Common myeloid progenitor, CD34-positive (primary cell): ENCODE measurements at regions of chr13 and their contacts with region 1.

Region 1: DNA sequence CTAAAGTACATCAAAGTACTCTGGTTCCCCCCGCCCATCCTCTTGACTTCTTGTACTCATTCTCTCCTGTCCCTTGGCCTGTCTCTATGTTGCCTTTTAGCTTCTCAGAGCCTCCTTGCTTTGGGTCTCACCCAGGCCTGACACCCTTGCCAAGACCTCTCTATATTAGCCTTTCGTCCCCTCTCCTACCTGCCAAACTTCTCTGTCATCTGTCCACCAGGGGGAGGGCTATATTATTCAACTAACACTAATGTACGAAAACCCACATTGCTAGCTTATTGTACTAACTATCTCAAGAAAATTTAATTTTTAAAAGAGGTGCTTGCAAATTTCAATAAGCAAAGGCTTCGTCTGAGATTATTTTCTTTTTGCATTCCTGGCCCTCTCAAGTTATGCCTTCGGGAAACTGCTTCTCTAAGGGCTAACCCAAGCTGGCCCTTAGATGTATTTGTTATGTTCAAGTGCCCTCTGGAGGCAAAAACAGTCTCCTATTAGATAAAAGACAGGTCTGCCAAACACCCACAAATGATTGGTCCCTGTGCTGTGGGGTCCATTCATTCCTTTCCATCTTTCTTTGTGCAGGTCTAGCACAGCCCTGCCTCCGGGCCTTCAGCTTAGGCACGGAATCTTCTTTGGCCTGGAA is 6.3 kb upstream of the MRPS31 start:
- DNase-seq: peak; percentile 76 to 78 (median 78)
- H3K4me3 ChIP-seq: peak overlapping the region in 6 of 7 experiments; percentile 37 to 73 (median 44)
- H3K27ac ChIP-seq: peak overlapping the region; percentile 40 to 64
- H3K4me1 ChIP-seq: peaks cover 0 to 24% (median 15%) of the 10 kb centered on the region in 4 experiments
- H3K27me3 ChIP-seq: no peaks in the 10 kb centered on the region

Region 2: GRCh38 chr13:40764587-40765403 is 12.5 kb before region 1 on chr13:
- CTCF ChIA-PET with region 1: interaction called, 36 read pairs
- POLR2A ChIA-PET with region 1: no interaction called
- DNase-seq: no peak
- H3K4me3 ChIP-seq: no peak overlapping the region
- H3K27ac ChIP-seq: no peak overlapping the region
- H3K4me1 ChIP-seq: peaks cover 0 to 4% (median 2%) of the 10 kb centered on the region in 4 experiments
- H3K27me3 ChIP-seq: no peaks in the 10 kb centered on the region

Region 3: GRCh38 chr13:40789275-40790133 is 12.2 kb after region 1 on chr13 and contains the start of gene SLC25A15:
- CTCF ChIA-PET with region 1: interaction called, 48 read pairs
- POLR2A ChIA-PET with region 1: no interaction called
- DNase-seq: peak; percentile 82 to 89 (median 86)
- H3K4me3 ChIP-seq: peak within 1 kb of the TSS; percentile 53 to 85 (median 73)
- H3K27ac ChIP-seq: peak within 1 kb of the TSS; percentile 68 to 81
- H3K4me1 ChIP-seq: peaks cover 0 to 16% (median 8%) of the 10 kb centered on the region in 4 experiments
- H3K27me3 ChIP-seq: no peaks in the 10 kb centered on the region

Region 4: GRCh38 chr13:40922437-40923040 is 145.3 kb after region 1 on chr13:
- CTCF ChIA-PET with region 1: interaction called, 11 read pairs
- POLR2A ChIA-PET with region 1: no interaction called
- DNase-seq: no peak
- H3K4me3 ChIP-seq: no peak overlapping the region
- H3K27ac ChIP-seq: no peak overlapping the region
- H3K4me1 ChIP-seq: peaks cover 4 to 18% (median 11%) of the 10 kb centered on the region in 4 experiments
- H3K27me3 ChIP-seq: no peaks in the 10 kb centered on the region